ENCODE measurements at regions of chr14 and their contacts with region 1.

Region 1: GRCh38 chr14:33569821-33570687 is 380.8 kb downstream of the EGLN3 start:
- DNase-seq: no peak
- ATAC-seq: no peak
- H3K4me3 ChIP-seq: no peak overlapping the region
- H3K27ac ChIP-seq: no peak overlapping the region
- H3K4me1 ChIP-seq: no peaks in the 10 kb centered on the region
- H3K27me3 ChIP-seq: no peaks in the 10 kb centered on the region
- CTCF ChIP-seq: no peak
- EP300 ChIP-seq: no peak
- POLR2A ChIP-seq: no peak
- RAD21 ChIP-seq: no peak

Region 2: GRCh38 chr14:32657081-32657480 is 913.0 kb before region 1 on chr14:
- CTCF ChIA-PET with region 1: no interaction called
- POLR2A ChIA-PET with region 1: no interaction called
- RAD21 ChIA-PET with region 1: no interaction called
- SMC1A ChIA-PET with region 1: no interaction called
- in situ Hi-C with region 1: no loop called
- intact Hi-C with region 1: no loop called
- DNase-seq: peak; percentile 24
- ATAC-seq: peak; percentile 83
- H3K4me3 ChIP-seq: peak overlapping the region; percentile 26; the same call in 1 of the 2 replicates
- H3K27ac ChIP-seq: peak overlapping the region; percentile 18
- H3K4me1 ChIP-seq: peaks cover 5% of the 10 kb centered on the region; the same call in 1 of the 2 replicates
- H3K27me3 ChIP-seq: no peaks in the 10 kb centered on the region
- CTCF ChIP-seq: no peak
- EP300 ChIP-seq: no peak
- POLR2A ChIP-seq: no peak
- RAD21 ChIP-seq: no peak

Region 3: GRCh38 chr14:33524244-33524643 is 45.8 kb before region 1 on chr14:
- CTCF ChIA-PET with region 1: interaction called, 36 read pairs
- POLR2A ChIA-PET with region 1: interaction called, 105 read pairs
- RAD21 ChIA-PET with region 1: interaction called, 279 read pairs
- SMC1A ChIA-PET with region 1: interaction called, 271 read pairs
- in situ Hi-C with region 1: no loop called
- intact Hi-C with region 1: no loop called
- DNase-seq: no peak
- ATAC-seq: peak; percentile 79
- H3K4me3 ChIP-seq: no peak overlapping the region
- H3K27ac ChIP-seq: no peak overlapping the region
- H3K4me1 ChIP-seq: no peaks in the 10 kb centered on the region
- H3K27me3 ChIP-seq: no peaks in the 10 kb centered on the region; a peak in 1 of 4 replicates
- CTCF ChIP-seq: no peak
- EP300 ChIP-seq: no peak; a peak in 1 of 4 replicates
- POLR2A ChIP-seq: no peak
- RAD21 ChIP-seq: no peak

Region 4: GRCh38 chr14:33542338-33543287 is 27.4 kb before region 1 on chr14:
- CTCF ChIA-PET with region 1: interaction called, 8 read pairs
- POLR2A ChIA-PET with region 1: interaction called, 86 read pairs
- RAD21 ChIA-PET with region 1: interaction called, 176 read pairs
- SMC1A ChIA-PET with region 1: interaction called, 215 read pairs
- in situ Hi-C with region 1: no loop called
- intact Hi-C with region 1: no loop called
- DNase-seq: no peak
- ATAC-seq: peak; percentile 63
- H3K4me3 ChIP-seq: no peak overlapping the region
- H3K27ac ChIP-seq: no peak overlapping the region
- H3K4me1 ChIP-seq: peaks cover 5% of the 10 kb centered on the region; the same call in 1 of the 2 replicates
- H3K27me3 ChIP-seq: no peaks in the 10 kb centered on the region
- CTCF ChIP-seq: no peak
- EP300 ChIP-seq: no peak
- POLR2A ChIP-seq: no peak
- RAD21 ChIP-seq: no peak

Region 5: GRCh38 chr14:33589326-33589725 is 19.3 kb after region 1 on chr14:
- CTCF ChIA-PET with region 1: interaction called, 4 read pairs
- POLR2A ChIA-PET with region 1: interaction called, 3 read pairs
- RAD21 ChIA-PET with region 1: interaction called, 6 read pairs
- SMC1A ChIA-PET with region 1: interaction called, 103 read pairs
- in situ Hi-C with region 1: no loop called
- intact Hi-C with region 1: no loop called
- DNase-seq: no peak
- ATAC-seq: no peak
- H3K4me3 ChIP-seq: no peak overlapping the region
- H3K27ac ChIP-seq: no peak overlapping the region
- H3K4me1 ChIP-seq: no peaks in the 10 kb centered on the region
- H3K27me3 ChIP-seq: no peaks in the 10 kb centered on the region; a peak in 2 of 4 replicates
- CTCF ChIP-seq: no peak
- EP300 ChIP-seq: no peak
- POLR2A ChIP-seq: no peak
- RAD21 ChIP-seq: no peak

Region 6: DNA sequence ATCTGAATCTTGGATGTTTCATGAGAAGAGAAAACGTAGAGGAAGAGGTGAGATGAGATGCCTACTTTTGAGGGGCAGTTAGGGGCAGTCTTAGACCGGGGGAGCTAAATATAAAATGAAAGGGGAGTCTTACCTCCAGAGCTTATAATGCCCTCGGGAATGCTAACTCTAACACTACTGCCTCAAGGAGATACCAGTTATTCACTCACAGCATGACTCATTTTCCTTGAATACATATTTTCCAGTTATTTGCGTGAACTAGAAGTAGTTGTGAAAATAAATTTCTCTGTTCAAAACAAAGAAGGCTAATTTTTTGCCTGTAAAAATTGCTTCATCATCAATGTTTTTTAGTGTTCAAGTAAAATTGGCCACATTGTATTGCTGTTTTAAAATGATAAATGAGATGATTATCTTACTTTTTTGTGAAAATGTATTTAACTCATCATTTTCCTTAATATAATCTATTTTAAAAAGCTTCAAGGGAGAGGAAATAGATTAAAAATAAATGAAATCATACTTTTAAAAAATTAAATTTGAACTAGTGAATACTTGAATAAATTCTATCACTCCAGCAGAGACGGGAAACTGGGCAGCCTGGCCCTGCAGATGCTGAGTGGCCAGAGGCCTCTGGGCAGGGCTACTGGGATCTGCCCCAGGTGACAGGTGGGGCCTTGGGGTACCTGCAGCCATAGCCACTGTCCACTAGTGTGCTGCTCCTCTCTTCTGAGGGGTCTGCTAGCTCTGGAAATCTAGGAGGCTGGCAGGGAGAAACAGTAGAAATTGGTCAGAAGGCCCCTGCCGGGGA is 41.6 kb after region 1 on chr14:
- CTCF ChIA-PET with region 1: no interaction called
- POLR2A ChIA-PET with region 1: interaction called, 5 read pairs
- RAD21 ChIA-PET with region 1: interaction called, 39 read pairs
- SMC1A ChIA-PET with region 1: interaction called, 32 read pairs
- in situ Hi-C with region 1: no loop called
- intact Hi-C with region 1: no loop called
- DNase-seq: no peak
- ATAC-seq: peak; percentile 29; the same call in 1 of the 3 replicates
- H3K4me3 ChIP-seq: no peak overlapping the region
- H3K27ac ChIP-seq: no peak overlapping the region
- H3K4me1 ChIP-seq: no peaks in the 10 kb centered on the region
- H3K27me3 ChIP-seq: no peaks in the 10 kb centered on the region
- CTCF ChIP-seq: no peak
- EP300 ChIP-seq: no peak
- POLR2A ChIP-seq: no peak
- RAD21 ChIP-seq: no peak

Region 7: DNA sequence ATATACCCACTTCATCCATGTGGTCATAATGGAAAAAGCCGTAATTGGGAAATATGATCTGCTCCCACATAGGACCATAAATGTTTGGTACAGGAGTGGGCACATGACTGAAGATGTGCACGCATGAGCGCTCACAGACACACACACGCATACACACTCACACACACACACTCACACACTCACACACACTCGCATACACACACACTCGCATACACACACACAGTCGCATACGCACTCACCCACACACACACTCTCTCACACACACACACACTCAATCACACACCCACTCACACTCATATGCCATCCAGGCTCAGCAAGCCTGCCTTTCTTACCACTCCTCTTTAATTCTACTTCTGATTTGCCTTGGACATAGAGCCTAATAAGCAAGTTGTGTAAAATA is 426.4 kb after region 1 on chr14:
- CTCF ChIA-PET with region 1: no interaction called
- POLR2A ChIA-PET with region 1: no interaction called
- RAD21 ChIA-PET with region 1: no interaction called
- SMC1A ChIA-PET with region 1: no interaction called
- in situ Hi-C with region 1: no loop called
- intact Hi-C with region 1: no loop called
- DNase-seq: no peak
- ATAC-seq: no peak
- H3K4me3 ChIP-seq: no peak overlapping the region
- H3K27ac ChIP-seq: no peak overlapping the region
- H3K4me1 ChIP-seq: no peaks in the 10 kb centered on the region
- H3K27me3 ChIP-seq: no peaks in the 10 kb centered on the region
- CTCF ChIP-seq: no peak
- EP300 ChIP-seq: no peak
- POLR2A ChIP-seq: no peak
- RAD21 ChIP-seq: no peak

Measured in GM12878 (cell line).